H1 (cell line): ENCODE measurements at regions of chr6 and their contacts with region 1.

Region 1: GRCh38 chr6:114419175-114419574 is 76.4 kb upstream of the HS3ST5 start:
- DNase-seq: no peak
- H3K4me3 ChIP-seq: no peak overlapping the region
- H3K27ac ChIP-seq: no peak overlapping the region
- H3K4me1 ChIP-seq: peaks cover 6 to 16% (median 11%) of the 10 kb centered on the region in 4 experiments; a peak in 5 of 7 replicates
- H3K27me3 ChIP-seq: no peaks in the 10 kb centered on the region
- CTCF ChIP-seq: no peak
- EP300 ChIP-seq: no peak
- POLR2A ChIP-seq: no peak
- RAD21 ChIP-seq: no peak

Region 2: DNA sequence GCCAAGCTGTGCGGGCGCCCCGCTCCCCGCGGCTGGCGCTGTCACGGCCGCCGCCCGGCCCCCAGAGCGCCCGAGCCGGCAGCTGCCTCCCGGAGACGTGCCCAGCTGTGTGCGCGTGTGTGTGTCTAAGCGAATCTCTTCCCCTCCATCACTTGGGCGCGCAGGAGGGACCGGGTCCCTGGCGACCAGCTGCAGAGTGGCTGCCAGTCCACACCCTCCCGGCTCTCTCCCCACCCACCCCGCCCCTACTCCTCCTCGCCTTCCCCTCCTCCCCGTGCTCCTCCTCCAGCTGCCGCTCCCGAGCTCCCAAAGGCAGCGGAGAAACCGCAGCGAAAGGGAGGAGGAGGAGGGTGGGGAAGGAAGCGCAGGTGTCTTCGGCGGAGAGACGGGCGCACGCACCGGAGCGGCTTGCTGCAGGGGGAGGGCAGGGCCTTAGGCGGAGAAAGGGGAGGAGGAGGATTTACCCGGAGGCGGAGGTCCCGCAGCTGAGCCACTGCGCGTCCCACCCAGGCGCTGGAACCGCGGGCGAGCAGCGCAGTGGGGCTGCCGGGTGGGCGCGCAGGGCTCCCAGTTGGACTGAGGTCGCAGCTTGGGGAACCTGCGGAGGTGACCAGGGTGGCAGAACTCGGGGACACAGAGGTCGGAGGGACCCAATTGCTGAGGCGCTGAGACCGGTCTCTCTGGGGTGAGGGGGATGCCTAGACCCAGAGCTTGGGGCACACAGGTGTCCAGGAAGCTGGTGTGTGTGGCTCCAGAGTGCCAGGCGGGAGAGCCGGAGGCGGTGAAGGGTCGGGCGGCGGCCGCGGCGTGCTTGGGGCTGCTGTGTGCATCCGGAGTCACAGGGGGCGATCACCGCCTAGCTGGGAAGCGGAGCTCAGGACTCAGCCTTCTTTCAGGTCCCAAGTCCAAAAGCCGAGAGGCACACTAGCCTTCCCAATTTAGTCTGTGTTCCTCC is 76.1 kb before region 1 on chr6 and contains the start of gene HS3ST5:
- CTCF ChIA-PET with region 1: no interaction called
- POLR2A ChIA-PET with region 1: interaction called, 36 read pairs
- DNase-seq: peak in 1 of 2 experiments; percentile 89
- H3K4me3 ChIP-seq: peak within 1 kb of the TSS; percentile 80 to 98 (median 82)
- H3K27ac ChIP-seq: peak within 1 kb of the TSS; percentile 56
- H3K4me1 ChIP-seq: peaks cover 0 to 15% (median 7%) of the 10 kb centered on the region in 4 experiments; a peak in 4 of 7 replicates
- H3K27me3 ChIP-seq: no peaks in the 10 kb centered on the region
- CTCF ChIP-seq: peak; percentile 76 to 84 (median 83)
- EP300 ChIP-seq: 0 out of 3 replicates have a peak, but pooled peaks of 1 of the 2 experiments have one; percentile 32
- POLR2A ChIP-seq: 0 out of 3 replicates have a peak, but pooled peaks of 1 of the 2 experiments have one; percentile 67
- RAD21 ChIP-seq: peak; percentile 88 to 90
- total RNA-seq, gene HS3ST5: 9.9 and 11.2 TPM in 2 replicates

Region 3: GRCh38 chr6:114364289-114364688 is 54.9 kb before region 1 on chr6:
- CTCF ChIA-PET with region 1: no interaction called
- POLR2A ChIA-PET with region 1: interaction called, 35 read pairs
- DNase-seq: no peak
- H3K4me3 ChIP-seq: no peak overlapping the region
- H3K27ac ChIP-seq: no peak overlapping the region
- H3K4me1 ChIP-seq: peaks cover 0 to 21% (median 11%) of the 10 kb centered on the region in 4 experiments; a peak in 6 of 7 replicates
- H3K27me3 ChIP-seq: no peaks in the 10 kb centered on the region
- CTCF ChIP-seq: no peak
- EP300 ChIP-seq: no peak
- POLR2A ChIP-seq: no peak
- RAD21 ChIP-seq: no peak

Region 4: GRCh38 chr6:114430534-114431124 is 11.5 kb after region 1 on chr6:
- CTCF ChIA-PET with region 1: no interaction called
- POLR2A ChIA-PET with region 1: interaction called, 12 read pairs
- DNase-seq: no peak
- H3K4me3 ChIP-seq: peak overlapping the region in 1 of 4 experiments; percentile 28; a peak in 1 of 8 replicates
- H3K27ac ChIP-seq: 0 out of 2 replicates have a peak overlapping the region, but pooled peaks have one; percentile 2
- H3K4me1 ChIP-seq: peaks cover 3 to 24% (median 8%) of the 10 kb centered on the region in 4 experiments; a peak in 5 of 7 replicates
- H3K27me3 ChIP-seq: no peaks in the 10 kb centered on the region
- CTCF ChIP-seq: no peak
- EP300 ChIP-seq: no peak
- POLR2A ChIP-seq: no peak
- RAD21 ChIP-seq: no peak

Region 5: DNA sequence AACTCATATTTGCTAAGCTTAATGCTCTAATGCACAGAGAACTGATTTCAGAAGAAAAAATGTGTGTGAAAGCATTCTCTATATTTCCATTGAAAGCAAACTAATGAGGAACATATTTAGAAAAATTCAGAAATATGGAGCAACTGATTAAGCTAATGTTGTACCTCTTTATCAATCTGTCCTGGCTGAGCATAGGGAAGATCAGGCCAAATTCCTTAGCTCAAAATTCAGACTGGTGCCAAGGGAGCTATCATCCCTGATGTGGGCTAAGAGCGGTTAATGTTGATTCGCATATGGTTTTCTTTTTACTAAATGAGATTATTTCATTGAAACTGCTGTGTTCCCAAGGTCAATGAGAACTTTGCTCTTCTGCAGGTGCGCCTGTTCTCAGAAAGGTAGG is 17.5 kb after region 1 on chr6:
- CTCF ChIA-PET with region 1: no interaction called
- POLR2A ChIA-PET with region 1: interaction called, 12 read pairs
- DNase-seq: no peak
- H3K4me3 ChIP-seq: no peak overlapping the region
- H3K27ac ChIP-seq: no peak overlapping the region
- H3K4me1 ChIP-seq: peaks cover 0 to 8% (median 2%) of the 10 kb centered on the region in 4 experiments; a peak in 3 of 7 replicates
- H3K27me3 ChIP-seq: no peaks in the 10 kb centered on the region
- CTCF ChIP-seq: no peak
- EP300 ChIP-seq: no peak
- POLR2A ChIP-seq: no peak
- RAD21 ChIP-seq: no peak

Region 6: DNA sequence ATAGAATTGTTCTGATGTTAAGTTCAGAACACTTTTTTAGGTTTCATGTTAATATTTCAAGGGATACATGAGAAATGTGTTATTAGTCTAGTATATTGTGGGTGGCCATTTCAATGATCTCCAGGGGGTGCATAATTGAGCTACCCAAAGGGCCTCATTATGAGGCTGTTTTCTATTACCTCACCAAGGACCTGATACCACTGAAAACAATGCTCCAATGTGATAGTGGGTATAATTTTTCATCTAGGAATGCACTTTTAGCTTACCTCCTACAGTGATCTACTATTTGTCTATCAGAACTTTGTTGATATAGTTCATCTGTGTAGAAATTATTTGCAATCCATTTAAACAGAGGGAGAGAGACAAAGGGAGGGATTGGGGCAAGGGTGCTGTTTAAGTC is 30.5 kb after region 1 on chr6:
- CTCF ChIA-PET with region 1: no interaction called
- POLR2A ChIA-PET with region 1: no interaction called
- DNase-seq: no peak
- H3K4me3 ChIP-seq: no peak overlapping the region
- H3K27ac ChIP-seq: no peak overlapping the region
- H3K4me1 ChIP-seq: peaks cover 0 to 13% (median 6%) of the 10 kb centered on the region in 4 experiments; a peak in 3 of 7 replicates
- H3K27me3 ChIP-seq: no peaks in the 10 kb centered on the region
- CTCF ChIP-seq: no peak
- EP300 ChIP-seq: no peak
- POLR2A ChIP-seq: no peak
- RAD21 ChIP-seq: no peak

Region 7: DNA sequence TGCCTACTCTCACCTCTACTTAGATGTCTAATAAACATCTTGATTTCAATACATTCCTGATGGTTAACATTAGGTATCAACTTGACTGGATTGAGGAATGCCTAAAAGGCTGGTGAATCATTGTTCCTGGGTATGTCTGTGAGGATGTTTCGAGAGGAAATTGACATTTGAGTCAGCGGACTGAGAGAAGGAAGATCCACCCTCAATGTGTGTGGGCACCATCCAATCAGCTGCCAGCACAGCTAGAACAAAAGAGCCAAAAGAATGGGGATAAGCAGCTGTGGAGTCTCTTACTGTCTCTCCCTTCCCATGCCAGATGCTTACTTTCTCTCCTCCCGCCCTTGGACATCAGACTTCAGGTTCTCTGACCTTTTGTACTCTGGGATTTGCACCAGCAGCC is 52.3 kb after region 1 on chr6:
- CTCF ChIA-PET with region 1: no interaction called
- POLR2A ChIA-PET with region 1: no interaction called
- DNase-seq: no peak
- H3K4me3 ChIP-seq: no peak overlapping the region
- H3K27ac ChIP-seq: no peak overlapping the region
- H3K4me1 ChIP-seq: no peaks in the 10 kb centered on the region
- H3K27me3 ChIP-seq: no peaks in the 10 kb centered on the region
- CTCF ChIP-seq: no peak
- EP300 ChIP-seq: no peak
- POLR2A ChIP-seq: no peak
- RAD21 ChIP-seq: no peak